IMR-90 (cell line): ENCODE measurements at regions of chr12 and their contacts with region 1.

Region 1: GRCh38 chr12:89636052-89636775 is 72.4 kb downstream of the ATP2B1 start:
- DNase-seq: peak; percentile 79
- ATAC-seq: peak; percentile 96
- H3K4me3 ChIP-seq: no peak overlapping the region
- H3K27ac ChIP-seq: no peak overlapping the region
- H3K4me1 ChIP-seq: peaks cover 6% of the 10 kb centered on the region; the same call in 1 of the 2 replicates
- H3K27me3 ChIP-seq: no peaks in the 10 kb centered on the region
- CTCF ChIP-seq: no peak
- POLR2A ChIP-seq: no peak
- RAD21 ChIP-seq: no peak

Region 2: DNA sequence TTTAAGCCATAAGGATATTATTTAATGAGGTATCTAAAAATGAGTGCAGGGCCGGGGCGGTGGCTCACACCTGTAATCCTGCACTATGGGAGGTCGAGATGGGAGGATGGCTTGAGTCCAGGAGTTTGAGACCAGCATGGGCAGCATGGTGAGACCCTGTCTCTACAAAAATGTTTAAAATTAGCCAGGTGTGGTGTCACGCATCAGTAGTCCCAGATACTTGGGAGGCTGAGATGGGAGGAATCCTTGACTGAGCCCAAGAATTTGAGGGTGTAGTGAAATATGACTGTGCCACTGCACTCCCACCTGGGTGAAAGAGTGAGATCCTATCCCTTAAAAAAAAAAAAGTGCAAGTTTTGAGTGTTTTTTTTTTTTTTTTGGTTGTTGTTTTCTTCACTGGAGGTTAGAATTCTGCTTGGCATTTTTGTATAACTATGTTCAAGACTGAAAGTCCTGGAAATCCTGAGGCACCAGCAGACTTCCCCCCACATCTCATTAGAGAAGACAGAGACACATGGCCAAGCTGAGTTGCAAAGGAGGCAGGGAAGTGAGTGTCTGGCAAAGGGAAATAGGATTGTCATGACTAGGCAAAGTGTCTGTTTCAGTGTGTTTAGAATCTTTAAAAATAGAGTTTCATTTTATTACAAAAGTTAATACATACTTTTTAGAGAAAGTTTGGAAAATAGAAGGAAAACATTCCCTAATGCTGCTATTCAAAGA is 230.4 kb before region 1 on chr12:
- CTCF ChIA-PET with region 1: no interaction called
- POLR2A ChIA-PET with region 1: no interaction called
- dilution Hi-C with region 1: no loop called
- in situ Hi-C with region 1: no loop called
- intact Hi-C with region 1: no loop called
- DNase-seq: no peak
- ATAC-seq: no peak
- H3K4me3 ChIP-seq: no peak overlapping the region
- H3K27ac ChIP-seq: no peak overlapping the region
- H3K4me1 ChIP-seq: no peaks in the 10 kb centered on the region
- H3K27me3 ChIP-seq: no peaks in the 10 kb centered on the region
- CTCF ChIP-seq: no peak
- POLR2A ChIP-seq: no peak
- RAD21 ChIP-seq: no peak

Region 3: DNA sequence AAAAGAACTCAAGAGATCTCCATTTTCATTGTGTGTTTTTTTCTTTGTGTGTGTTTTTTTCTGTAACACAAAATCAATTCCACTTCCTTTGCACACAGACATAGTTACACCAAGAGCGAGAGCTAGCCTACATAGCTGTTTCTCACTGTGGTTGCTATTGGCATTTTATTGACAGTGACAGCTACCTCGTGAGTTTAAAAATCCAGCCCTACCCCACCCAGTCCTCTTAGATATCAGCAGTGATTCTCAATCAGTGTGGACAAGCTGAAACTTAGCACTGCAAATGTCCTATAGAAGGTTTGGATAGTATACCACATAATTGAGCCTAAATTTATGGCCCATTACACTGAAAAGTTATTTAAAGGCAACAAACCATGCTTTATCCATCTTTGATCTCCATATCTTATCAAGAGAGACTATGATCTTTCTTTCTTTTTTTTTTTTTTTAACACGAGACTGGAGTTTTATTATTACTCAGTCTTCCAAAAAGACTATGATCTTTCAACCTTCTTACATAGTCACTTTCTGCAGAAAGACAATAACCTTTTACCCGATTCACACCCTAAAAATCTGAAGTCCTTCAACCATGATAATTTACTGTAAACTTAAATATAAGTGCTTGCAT is 25.6 kb after region 1 on chr12:
- CTCF ChIA-PET with region 1: no interaction called
- POLR2A ChIA-PET with region 1: interaction called, 13 read pairs
- dilution Hi-C with region 1: no loop called
- in situ Hi-C with region 1: no loop called
- intact Hi-C with region 1: no loop called
- DNase-seq: no peak
- ATAC-seq: no peak
- H3K4me3 ChIP-seq: no peak overlapping the region
- H3K27ac ChIP-seq: no peak overlapping the region
- H3K4me1 ChIP-seq: peaks cover 6% of the 10 kb centered on the region
- H3K27me3 ChIP-seq: no peaks in the 10 kb centered on the region
- CTCF ChIP-seq: no peak
- POLR2A ChIP-seq: no peak
- RAD21 ChIP-seq: no peak